Activated CD8-positive, alpha-beta T cell treated with anti-CD3 and anti-CD28 coated beads for 36 hours (primary cell): ENCODE measurements at regions of chr1 and their contacts with region 1.

Region 1: GRCh38 chr1:101004670-101005069 is 20.9 kb downstream of the DPH5 start:
- DNase-seq: no peak
- ATAC-seq: no peak
- H3K4me3 Mint-ChIP-seq: no peak overlapping the region
- H3K27ac Mint-ChIP-seq: no peak overlapping the region
- H3K4me1 Mint-ChIP-seq: peaks cover 57% of the 10 kb centered on the region
- H3K27me3 Mint-ChIP-seq: no peaks in the 10 kb centered on the region
- CTCF ChIP-seq: no peak

Region 2: DNA sequence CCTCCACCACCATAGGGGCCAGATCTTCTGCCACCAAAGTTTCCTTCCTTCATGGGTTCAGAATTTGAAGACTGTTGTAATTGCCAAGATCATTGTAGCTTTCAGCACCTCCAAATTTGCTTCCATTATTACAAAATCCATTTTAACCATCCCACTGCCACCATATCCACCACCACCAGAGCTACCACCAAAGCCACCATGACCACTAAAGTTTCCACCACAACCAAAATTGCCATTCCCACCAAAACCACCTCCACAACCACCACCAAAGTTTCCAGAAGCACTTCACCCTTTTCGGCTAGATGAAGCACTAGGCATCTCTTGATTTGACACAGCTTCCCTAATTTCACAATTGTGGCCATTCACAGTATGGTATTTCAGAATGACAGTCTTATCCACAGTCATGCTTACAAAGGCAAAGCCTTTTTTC is 63.6 kb before region 1 on chr1:
- CTCF ChIA-PET with region 1: no interaction called
- POLR2A ChIA-PET with region 1: no interaction called
- intact Hi-C with region 1: loop called (anchors 5 kb)
- DNase-seq: peak; percentile 40
- ATAC-seq: peak; percentile 78
- H3K4me3 Mint-ChIP-seq: peak overlapping the region; percentile 71
- H3K27ac Mint-ChIP-seq: peak overlapping the region; percentile 93
- H3K4me1 Mint-ChIP-seq: peaks cover 37% of the 10 kb centered on the region
- H3K27me3 Mint-ChIP-seq: peaks cover 2% of the 10 kb centered on the region
- CTCF ChIP-seq: no peak

Region 3: GRCh38 chr1:101060992-101061391 is 56.3 kb after region 1 on chr1:
- CTCF ChIA-PET with region 1: no interaction called
- POLR2A ChIA-PET with region 1: no interaction called
- intact Hi-C with region 1: no loop called
- DNase-seq: no peak
- ATAC-seq: no peak
- H3K4me3 Mint-ChIP-seq: no peak overlapping the region
- H3K27ac Mint-ChIP-seq: no peak overlapping the region
- H3K4me1 Mint-ChIP-seq: peaks cover 28% of the 10 kb centered on the region
- H3K27me3 Mint-ChIP-seq: no peaks in the 10 kb centered on the region
- CTCF ChIP-seq: no peak